ENCODE measurements at regions of chr6 and their contacts with region 1.

Region 1: DNA sequence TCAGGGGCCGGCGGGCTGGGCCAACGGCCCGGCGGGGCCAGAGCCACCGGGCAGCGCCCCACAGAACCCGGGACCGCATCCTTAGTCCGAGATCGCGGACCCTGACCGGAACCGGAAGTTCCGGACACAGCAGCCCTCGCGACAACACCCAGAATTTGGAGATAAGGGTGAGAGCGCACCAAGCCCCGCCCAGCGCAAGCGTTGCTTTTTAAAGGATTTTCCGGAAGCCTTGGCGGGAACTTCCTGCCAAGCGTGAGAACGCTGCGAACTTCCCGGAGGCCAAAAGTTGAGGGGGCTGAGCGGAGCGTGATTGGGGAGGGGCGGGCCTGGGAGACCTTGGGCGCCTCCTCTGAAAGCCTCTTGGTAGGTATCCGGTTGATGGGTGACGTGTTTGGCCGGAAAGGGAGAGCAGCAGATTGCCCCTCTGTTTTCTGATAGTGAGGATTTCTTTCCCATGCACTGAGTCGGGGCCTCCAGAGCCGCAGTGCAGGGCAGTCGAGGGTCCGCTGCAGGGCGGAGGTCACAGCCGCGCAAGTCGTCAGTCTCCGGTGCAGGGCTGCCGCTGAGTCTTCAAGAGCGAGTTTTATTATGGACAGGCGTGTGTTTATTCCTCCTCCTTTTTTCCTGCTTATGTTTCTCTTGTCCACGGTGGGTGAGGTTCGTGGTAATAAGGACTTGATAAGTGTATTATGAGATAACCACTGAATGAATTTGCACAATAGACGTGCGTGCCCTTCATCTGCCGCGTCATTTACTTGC is at the start of gene MTRF1L:
- DNase-seq: peak; percentile 73 to 89 (median 77)
- H3K4me3 ChIP-seq: peak within 1 kb of the TSS; percentile 89 to 92
- H3K4me3 Mint-ChIP-seq: peak within 1 kb of the TSS; percentile 94 to 98 (median 96)
- H3K27ac ChIP-seq: peak within 1 kb of the TSS; percentile 82
- H3K27ac Mint-ChIP-seq: peak within 1 kb of the TSS; percentile 82 to 97 (median 94)
- H3K4me1 ChIP-seq: peaks cover 43% of the 10 kb centered on the region
- H3K4me1 Mint-ChIP-seq: peaks cover 34 to 48% (median 41%) of the 10 kb centered on the region in 4 donors
- H3K27me3 ChIP-seq: no peaks in the 10 kb centered on the region
- H3K27me3 Mint-ChIP-seq: no peaks in the 10 kb centered on the region
- total RNA-seq, gene MTRF1L: 17.3 to 18.3 TPM

Region 2: GRCh38 chr6:152595505-152595904 is 407.3 kb before region 1 on chr6:
- CTCF ChIA-PET with region 1: no interaction called
- POLR2A ChIA-PET with region 1: no interaction called
- intact Hi-C with region 1: no loop called
- DNase-seq: no peak
- H3K4me3 ChIP-seq: no peak overlapping the region
- H3K4me3 Mint-ChIP-seq: no peak overlapping the region
- H3K27ac ChIP-seq: no peak overlapping the region
- H3K27ac Mint-ChIP-seq: no peak overlapping the region
- H3K4me1 ChIP-seq: no peaks in the 10 kb centered on the region
- H3K4me1 Mint-ChIP-seq: no peaks in the 10 kb centered on the region
- H3K27me3 ChIP-seq: no peaks in the 10 kb centered on the region
- H3K27me3 Mint-ChIP-seq: peaks cover 1 to 2% of the 10 kb centered on the region in 2 donors

Region 3: GRCh38 chr6:153084409-153084808 is 81.6 kb after region 1 on chr6:
- CTCF ChIA-PET with region 1: no interaction called
- POLR2A ChIA-PET with region 1: no interaction called
- intact Hi-C with region 1: no loop called
- DNase-seq: no peak
- H3K4me3 ChIP-seq: no peak overlapping the region
- H3K4me3 Mint-ChIP-seq: no peak overlapping the region
- H3K27ac ChIP-seq: no peak overlapping the region
- H3K27ac Mint-ChIP-seq: no peak overlapping the region
- H3K4me1 ChIP-seq: no peaks in the 10 kb centered on the region
- H3K4me1 Mint-ChIP-seq: no peaks in the 10 kb centered on the region
- H3K27me3 ChIP-seq: no peaks in the 10 kb centered on the region
- H3K27me3 Mint-ChIP-seq: peaks cover 2 to 12% of the 10 kb centered on the region in 2 donors

Region 4: GRCh38 chr6:154733012-154733625 is 1730.3 kb after region 1 on chr6 and contains the start of gene SCAF8:
- CTCF ChIA-PET with region 1: no interaction called
- POLR2A ChIA-PET with region 1: no interaction called
- intact Hi-C with region 1: loop called (anchors 10 kb)
- DNase-seq: peak; percentile 77 to 93 (median 88)
- H3K4me3 ChIP-seq: peak within 1 kb of the TSS; percentile 63 to 68
- H3K4me3 Mint-ChIP-seq: peak within 1 kb of the TSS; percentile 87 to 95 (median 90)
- H3K27ac ChIP-seq: peak within 1 kb of the TSS; percentile 91
- H3K27ac Mint-ChIP-seq: peak within 1 kb of the TSS; percentile 82 to 98 (median 95)
- H3K4me1 ChIP-seq: peaks cover 45% of the 10 kb centered on the region
- H3K4me1 Mint-ChIP-seq: peaks cover 26 to 48% (median 36%) of the 10 kb centered on the region in 4 donors
- H3K27me3 ChIP-seq: no peaks in the 10 kb centered on the region
- H3K27me3 Mint-ChIP-seq: no peaks in the 10 kb centered on the region
- total RNA-seq, gene SCAF8: 59.9 to 60.5 TPM